ENCODE measurements at regions of chr7 and their contacts with region 1.

Region 1: GRCh38 chr7:21427182-21427870 is 557 bp upstream of the SP4 start:
- DNase-seq: peak; percentile 98
- H3K4me3 Mint-ChIP-seq: peak overlapping the region; percentile 100
- H3K27ac Mint-ChIP-seq: peak overlapping the region; percentile 99
- H3K4me1 Mint-ChIP-seq: peaks cover 6% of the 10 kb centered on the region
- H3K27me3 Mint-ChIP-seq: no peaks in the 10 kb centered on the region
- CTCF ChIP-seq: no peak

Region 2: GRCh38 chr7:20798081-20798693 is 629.1 kb before region 1 on chr7:
- CTCF ChIA-PET with region 1: no interaction called
- POLR2A ChIA-PET with region 1: no interaction called
- intact Hi-C with region 1: loop called (anchors 10 kb)
- DNase-seq: peak; percentile 57
- H3K4me3 Mint-ChIP-seq: peak overlapping the region; percentile 82
- H3K27ac Mint-ChIP-seq: no peak overlapping the region
- H3K4me1 Mint-ChIP-seq: peaks cover 5% of the 10 kb centered on the region
- H3K27me3 Mint-ChIP-seq: peaks cover 7% of the 10 kb centered on the region
- CTCF ChIP-seq: no peak

Region 3: DNA sequence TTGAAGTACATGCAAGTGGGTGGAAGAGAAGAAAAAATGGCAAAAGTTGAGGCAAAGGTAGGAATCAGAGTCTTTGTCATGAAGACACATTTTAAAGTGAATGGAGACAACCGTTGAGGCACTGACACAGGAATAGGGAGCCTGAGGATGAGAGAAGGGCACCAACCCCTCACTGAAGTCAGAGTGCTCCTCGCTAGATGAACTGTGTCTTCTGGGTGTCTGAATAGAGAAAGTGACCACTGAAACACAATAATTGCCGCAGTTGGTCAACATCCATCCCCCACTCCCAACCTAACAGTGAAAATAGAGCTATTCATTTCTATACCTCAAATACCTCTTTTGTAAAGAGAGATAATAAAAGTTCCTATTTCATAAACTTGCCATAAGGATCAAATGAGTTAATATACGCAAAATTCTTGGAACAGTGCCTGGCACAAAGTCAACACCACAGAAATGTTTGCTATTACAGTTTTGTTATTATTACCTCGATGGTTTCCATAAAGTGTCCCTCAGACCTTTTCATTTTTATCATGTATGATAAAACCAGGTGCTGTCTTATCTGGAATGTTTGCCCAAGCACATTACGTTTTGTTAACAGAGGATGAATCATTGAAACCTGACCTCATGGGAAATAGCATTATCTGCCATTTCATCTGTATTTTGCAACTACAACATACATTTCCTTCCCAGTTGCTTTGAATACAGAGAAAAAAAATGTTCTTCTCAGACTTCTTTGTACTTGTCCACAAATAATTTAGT is 61.3 kb before region 1 on chr7:
- CTCF ChIA-PET with region 1: no interaction called
- POLR2A ChIA-PET with region 1: interaction called, 3 read pairs
- intact Hi-C with region 1: loop called (anchors 5 kb)
- DNase-seq: peak; percentile 76
- H3K4me3 Mint-ChIP-seq: no peak overlapping the region
- H3K27ac Mint-ChIP-seq: no peak overlapping the region
- H3K4me1 Mint-ChIP-seq: peaks cover 7% of the 10 kb centered on the region
- H3K27me3 Mint-ChIP-seq: no peaks in the 10 kb centered on the region
- CTCF ChIP-seq: no peak

Region 4: DNA sequence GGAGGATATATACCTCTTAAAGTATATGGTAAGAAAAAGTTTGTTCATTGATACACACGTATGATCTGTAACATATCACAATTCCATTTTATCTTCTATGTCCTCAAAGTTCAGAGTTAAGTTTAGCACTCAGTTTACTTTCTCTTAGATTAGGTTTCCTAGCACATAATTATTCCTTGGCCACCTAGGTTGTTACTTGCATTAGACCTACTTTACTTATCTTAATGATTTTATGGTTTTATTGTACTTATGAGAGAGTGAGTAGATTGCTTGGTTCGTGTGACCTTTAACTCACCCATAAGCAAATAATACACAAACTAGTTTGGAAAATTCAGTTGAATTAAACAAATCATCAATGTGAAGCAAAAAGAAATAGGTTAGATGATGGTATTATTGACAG is 33.4 kb before region 1 on chr7:
- CTCF ChIA-PET with region 1: no interaction called
- POLR2A ChIA-PET with region 1: no interaction called
- intact Hi-C with region 1: no loop called
- DNase-seq: no peak
- H3K4me3 Mint-ChIP-seq: no peak overlapping the region
- H3K27ac Mint-ChIP-seq: no peak overlapping the region
- H3K4me1 Mint-ChIP-seq: no peaks in the 10 kb centered on the region
- H3K27me3 Mint-ChIP-seq: no peaks in the 10 kb centered on the region
- CTCF ChIP-seq: no peak

Region 5: GRCh38 chr7:21568762-21569161 is 141.4 kb after region 1 on chr7:
- CTCF ChIA-PET with region 1: no interaction called
- POLR2A ChIA-PET with region 1: no interaction called
- intact Hi-C with region 1: no loop called
- DNase-seq: peak; percentile 36
- H3K4me3 Mint-ChIP-seq: no peak overlapping the region
- H3K27ac Mint-ChIP-seq: peak overlapping the region; percentile 42
- H3K4me1 Mint-ChIP-seq: no peaks in the 10 kb centered on the region
- H3K27me3 Mint-ChIP-seq: no peaks in the 10 kb centered on the region
- CTCF ChIP-seq: peak; percentile 18

Region 6: DNA sequence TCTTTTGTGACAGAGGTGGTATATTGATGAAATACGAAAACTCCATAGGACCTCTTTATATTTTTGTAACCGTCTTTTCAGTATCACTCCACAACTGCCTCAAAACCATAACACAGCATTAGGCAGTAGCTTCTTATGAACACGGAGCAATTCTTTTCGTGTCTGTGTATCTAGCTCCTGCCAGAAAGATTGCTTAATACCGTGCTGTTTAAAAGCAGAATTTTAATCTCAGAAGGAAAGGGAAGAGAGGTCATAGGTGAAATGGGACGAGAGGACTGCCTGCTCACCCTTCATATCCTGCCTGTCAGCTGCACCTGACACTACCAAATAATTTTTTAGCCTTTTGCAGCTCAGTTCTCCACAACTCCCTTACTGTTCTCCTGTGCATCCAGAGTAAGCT is 316.2 kb after region 1 on chr7:
- CTCF ChIA-PET with region 1: no interaction called
- POLR2A ChIA-PET with region 1: no interaction called
- intact Hi-C with region 1: no loop called
- DNase-seq: no peak
- H3K4me3 Mint-ChIP-seq: no peak overlapping the region
- H3K27ac Mint-ChIP-seq: no peak overlapping the region
- H3K4me1 Mint-ChIP-seq: no peaks in the 10 kb centered on the region
- H3K27me3 Mint-ChIP-seq: no peaks in the 10 kb centered on the region
- CTCF ChIP-seq: no peak

Measured in MCF 10A (cell line).